Stomach (tissue), 19 donors: ENCODE measurements at regions of chr1 and their contacts with region 1.

Region 1: GRCh38 chr1:186985889-186986491 is 157.2 kb downstream of the PLA2G4A start:
- DNase-seq: peak in 1 of 2 donors; percentile 83
- H3K4me3 ChIP-seq: no peak overlapping the region
- H3K27ac ChIP-seq: no peak overlapping the region
- H3K4me1 ChIP-seq: peaks cover 0 to 31% (median 9%) of the 10 kb centered on the region in 4 donors
- H3K27me3 ChIP-seq: no peaks in the 10 kb centered on the region
- CTCF ChIP-seq: peak in 5 of 7 experiments; percentile 42 to 75 (median 62)
- EP300 ChIP-seq: no peak
- POLR2A ChIP-seq: no peak

Region 2: DNA sequence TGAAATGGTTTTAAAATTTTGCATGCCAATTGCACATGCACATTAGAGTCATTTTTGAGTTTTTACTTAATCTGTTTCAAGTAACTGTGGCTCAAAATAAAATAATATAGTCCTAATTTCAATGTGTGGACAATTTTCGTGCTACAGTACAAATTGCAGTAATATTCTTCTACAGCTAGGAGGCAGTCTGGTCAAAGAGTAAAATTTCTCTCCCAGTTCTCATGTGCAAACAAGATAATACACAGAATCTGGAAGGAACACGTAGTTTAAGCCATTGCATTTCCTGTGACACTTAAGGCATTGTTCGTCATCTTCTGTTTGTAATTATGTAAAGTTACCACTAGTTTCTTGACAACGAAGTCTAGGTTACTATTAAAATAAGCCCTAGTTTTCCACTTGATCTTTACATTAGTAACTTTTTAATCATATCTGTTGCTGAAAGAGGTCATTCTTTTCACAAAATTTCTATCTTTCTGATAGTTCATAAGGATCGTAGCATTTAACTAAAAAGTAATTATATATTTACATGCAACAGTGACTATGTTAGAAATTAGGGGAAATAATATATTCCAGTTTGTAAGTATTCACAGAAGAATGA is 581.4 kb before region 1 on chr1:
- intact Hi-C with region 1: loop called (anchors 10 kb)
- DNase-seq: peak in 1 of 2 donors; percentile 66
- H3K4me3 ChIP-seq: no peak overlapping the region
- H3K27ac ChIP-seq: no peak overlapping the region
- H3K4me1 ChIP-seq: no peaks in the 10 kb centered on the region
- H3K27me3 ChIP-seq: no peaks in the 10 kb centered on the region
- CTCF ChIP-seq: peak in 4 of 7 experiments; percentile 52 to 67 (median 62)
- EP300 ChIP-seq: no peak
- POLR2A ChIP-seq: no peak

Region 3: GRCh38 chr1:186482661-186483255 is 503.2 kb before region 1 on chr1:
- intact Hi-C with region 1: loop called (anchors 10 kb)
- DNase-seq: peak; percentile 42 to 86
- H3K4me3 ChIP-seq: no peak overlapping the region
- H3K27ac ChIP-seq: no peak overlapping the region
- H3K4me1 ChIP-seq: peaks cover 0 to 3% (median 0%) of the 10 kb centered on the region in 4 donors
- H3K27me3 ChIP-seq: no peaks in the 10 kb centered on the region
- CTCF ChIP-seq: peak in 5 of 7 experiments; percentile 66 to 79 (median 74)
- EP300 ChIP-seq: no peak
- POLR2A ChIP-seq: no peak

Region 4: DNA sequence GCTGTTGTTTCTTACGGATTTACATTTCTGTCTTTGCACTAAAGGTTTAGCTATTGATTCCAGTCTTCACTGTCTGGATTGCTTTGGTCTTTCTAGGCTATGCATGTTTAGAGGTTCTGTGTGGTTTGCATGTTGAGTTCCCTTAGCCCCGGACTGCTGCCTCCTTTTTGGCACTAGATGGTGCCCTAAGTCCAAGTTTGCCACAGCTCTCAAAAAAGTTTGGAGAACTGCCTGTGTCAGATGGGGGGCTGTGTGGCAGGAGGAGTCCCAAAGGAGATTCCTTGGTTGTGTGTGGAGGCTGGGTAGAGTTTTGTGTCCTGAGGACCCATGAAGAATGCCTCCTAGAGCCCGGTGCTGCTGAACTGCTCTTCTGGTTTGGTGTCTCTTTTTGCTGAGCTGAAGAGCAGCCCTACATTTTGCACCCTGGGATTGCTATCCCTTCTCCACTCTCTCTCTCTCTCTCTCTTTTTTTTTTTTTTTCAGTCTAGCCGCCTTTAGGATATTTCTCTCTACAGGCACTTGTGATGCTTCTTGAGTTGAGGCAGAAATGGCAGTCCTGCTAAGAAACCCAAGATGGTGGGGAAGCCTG is 380.1 kb before region 1 on chr1:
- intact Hi-C with region 1: loop called (anchors 5 kb)
- DNase-seq: peak in 1 of 2 donors; percentile 73
- H3K4me3 ChIP-seq: no peak overlapping the region
- H3K27ac ChIP-seq: no peak overlapping the region
- H3K4me1 ChIP-seq: no peaks in the 10 kb centered on the region
- H3K27me3 ChIP-seq: no peaks in the 10 kb centered on the region
- CTCF ChIP-seq: peak in 4 of 7 experiments; percentile 23 to 39 (median 36)
- EP300 ChIP-seq: no peak
- POLR2A ChIP-seq: no peak

Region 5: GRCh38 chr1:187151555-187151954 is 165.6 kb after region 1 on chr1:
- intact Hi-C with region 1: no loop called
- DNase-seq: no peak
- H3K4me3 ChIP-seq: no peak overlapping the region
- H3K27ac ChIP-seq: no peak overlapping the region
- H3K4me1 ChIP-seq: no peaks in the 10 kb centered on the region
- H3K27me3 ChIP-seq: no peaks in the 10 kb centered on the region
- CTCF ChIP-seq: no peak
- EP300 ChIP-seq: no peak
- POLR2A ChIP-seq: no peak